ENCODE measurements at regions of chr17 and their contacts with region 1.

Region 1: GRCh38 chr17:409848-410545 is 57.4 kb upstream of the RPH3AL start:
- H3K4me3 ChIP-seq: peak overlapping the region; percentile 45
- H3K27ac ChIP-seq: peak overlapping the region; percentile 70; the same call in 1 of the 2 replicates
- H3K4me1 ChIP-seq: peaks cover 6% of the 10 kb centered on the region
- CTCF ChIP-seq: peak; percentile 76

Region 2: GRCh38 chr17:301681-302298 is 108.2 kb before region 1 on chr17:
- CTCF ChIA-PET with region 1: no interaction called
- POLR2A ChIA-PET with region 1: no interaction called
- H3K4me3 ChIP-seq: no peak overlapping the region
- H3K27ac ChIP-seq: no peak overlapping the region
- H3K4me1 ChIP-seq: no peaks in the 10 kb centered on the region
- CTCF ChIP-seq: no peak

Region 3: DNA sequence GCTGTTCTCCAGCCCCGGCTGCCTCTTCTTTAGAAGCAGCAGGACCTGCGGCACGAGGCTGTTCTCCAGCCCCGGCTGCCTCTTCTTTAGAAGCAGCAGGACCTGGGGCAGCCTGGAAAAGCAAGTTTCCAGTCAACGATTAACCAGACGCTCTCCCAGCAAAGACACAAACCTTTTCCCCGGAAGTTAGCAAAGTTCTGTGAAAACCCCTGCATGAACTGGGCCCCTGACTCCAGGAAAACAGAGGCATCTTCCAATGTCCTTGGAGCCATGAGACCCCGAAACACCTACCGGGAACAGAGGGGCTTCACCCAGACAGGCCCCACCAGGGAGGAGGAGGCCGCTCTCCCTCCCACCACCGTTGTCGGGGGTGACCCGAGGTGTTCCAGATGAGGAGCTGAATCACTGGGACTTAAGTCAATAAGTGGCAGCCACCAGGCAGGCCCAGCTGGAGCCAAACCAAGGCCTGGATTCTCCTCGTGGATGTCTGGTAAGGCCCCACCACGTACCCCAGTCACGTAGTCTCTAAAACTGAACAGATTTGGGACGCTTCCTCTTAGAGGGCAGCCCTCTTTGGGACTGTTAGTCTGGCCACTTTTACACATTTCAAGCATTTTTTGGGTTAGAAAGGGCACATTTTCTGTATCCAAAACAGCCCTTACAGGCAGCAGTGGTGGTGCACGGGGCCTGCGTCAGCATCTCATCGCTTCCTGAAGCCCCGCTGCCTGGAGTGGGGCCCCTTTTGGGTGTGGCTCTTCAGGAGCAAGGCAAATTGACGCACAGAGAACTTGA is 57.4 kb before region 1 on chr17 and contains the start of gene RPH3AL:
- CTCF ChIA-PET with region 1: no interaction called
- POLR2A ChIA-PET with region 1: no interaction called
- H3K4me3 ChIP-seq: no peak within 1 kb of the TSS
- H3K27ac ChIP-seq: peak within 1 kb of the TSS; percentile 49; the same call in 1 of the 2 replicates
- H3K4me1 ChIP-seq: peaks cover 13% of the 10 kb centered on the region
- CTCF ChIP-seq: no peak

Region 4: DNA sequence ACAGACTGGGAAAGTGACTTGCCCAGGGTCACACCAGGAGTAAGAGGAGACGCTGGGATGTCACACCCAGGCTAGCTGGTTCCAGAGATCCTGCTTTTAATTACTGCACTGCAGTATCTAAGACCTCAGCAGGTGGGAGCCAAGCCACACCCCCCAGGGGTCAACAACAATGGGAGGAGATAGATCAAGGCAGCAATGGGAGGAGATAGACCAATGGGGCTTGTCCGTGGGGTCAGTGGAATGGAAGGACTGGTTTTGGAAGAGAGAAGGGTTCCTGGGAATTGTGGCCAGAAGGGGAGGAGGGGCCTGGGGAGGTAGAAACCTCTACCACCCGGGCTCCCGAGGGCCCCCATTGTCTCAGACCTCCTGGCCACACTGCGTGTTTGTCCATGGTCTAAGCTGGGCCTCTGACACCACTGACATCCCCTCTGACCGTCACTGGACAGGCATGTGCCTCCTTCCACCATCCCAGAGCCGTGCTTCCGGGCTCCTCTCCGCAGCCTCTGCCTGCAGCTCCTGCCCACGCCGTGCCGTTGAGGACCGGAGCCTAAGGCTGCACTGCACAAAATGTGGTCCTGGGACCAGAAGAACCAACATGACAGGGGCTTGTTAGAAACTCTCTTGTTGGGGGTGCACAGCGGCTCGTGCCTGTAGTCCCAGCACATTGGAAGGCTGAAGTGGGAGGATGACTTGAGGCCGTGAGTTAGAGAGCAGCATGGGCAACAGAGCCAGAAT is 12.4 kb after region 1 on chr17:
- CTCF ChIA-PET with region 1: interaction called, 16 read pairs
- POLR2A ChIA-PET with region 1: interaction called, 7 read pairs
- H3K4me3 ChIP-seq: no peak overlapping the region
- H3K27ac ChIP-seq: no peak overlapping the region
- H3K4me1 ChIP-seq: no peaks in the 10 kb centered on the region
- CTCF ChIP-seq: no peak

Region 5: DNA sequence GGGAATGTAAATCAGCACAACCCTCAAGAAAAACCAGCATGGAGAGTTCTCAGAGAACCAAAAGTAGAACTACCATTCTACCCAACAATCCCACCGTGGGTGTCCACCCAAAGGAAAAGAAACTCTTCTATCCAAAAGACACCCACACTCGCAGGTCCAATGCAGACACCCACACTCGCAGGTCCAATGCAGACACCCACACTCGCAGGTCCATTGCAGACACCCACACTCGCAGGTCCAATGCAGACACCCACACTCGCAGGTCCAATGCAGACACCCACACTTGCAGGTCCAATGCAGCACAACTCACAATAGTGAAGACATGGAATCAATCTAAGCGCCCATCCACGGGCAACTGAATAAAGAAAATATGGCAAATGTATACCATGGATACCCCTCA is 19.6 kb after region 1 on chr17:
- CTCF ChIA-PET with region 1: interaction called, 16 read pairs
- POLR2A ChIA-PET with region 1: no interaction called
- H3K4me3 ChIP-seq: no peak overlapping the region
- H3K27ac ChIP-seq: no peak overlapping the region
- H3K4me1 ChIP-seq: no peaks in the 10 kb centered on the region
- CTCF ChIP-seq: no peak

Region 6: DNA sequence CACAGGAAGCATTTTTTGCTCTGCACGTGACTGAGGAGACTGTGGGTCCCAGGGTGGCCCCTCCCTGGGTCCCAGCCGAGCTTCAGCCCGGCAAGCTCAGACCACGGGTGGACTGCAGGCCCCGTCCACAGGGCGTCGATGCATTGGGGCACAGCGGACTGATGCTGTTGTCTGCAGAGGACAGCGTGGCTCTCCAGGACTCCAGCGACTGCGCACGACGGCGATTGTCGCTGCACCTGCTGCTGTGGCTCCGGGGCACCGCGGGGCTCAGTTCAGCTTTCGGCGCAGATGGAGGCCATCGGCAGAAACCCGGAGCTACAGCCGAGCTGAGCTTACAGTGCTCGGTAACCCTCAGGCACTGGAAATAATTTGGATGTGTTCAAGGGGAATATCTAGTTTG is 31.2 kb after region 1 on chr17:
- CTCF ChIA-PET with region 1: interaction called, 14 read pairs
- POLR2A ChIA-PET with region 1: interaction called, 3 read pairs
- H3K4me3 ChIP-seq: no peak overlapping the region
- H3K27ac ChIP-seq: no peak overlapping the region
- H3K4me1 ChIP-seq: no peaks in the 10 kb centered on the region
- CTCF ChIP-seq: no peak

Region 7: GRCh38 chr17:688100-688989 is 278.3 kb after region 1 on chr17:
- CTCF ChIA-PET with region 1: interaction called, 27 read pairs
- POLR2A ChIA-PET with region 1: no interaction called
- H3K4me3 ChIP-seq: no peak overlapping the region
- H3K27ac ChIP-seq: no peak overlapping the region
- H3K4me1 ChIP-seq: no peaks in the 10 kb centered on the region
- CTCF ChIP-seq: no peak

Region 8: GRCh38 chr17:700504-701094 is 290.6 kb after region 1 on chr17:
- CTCF ChIA-PET with region 1: interaction called, 173 read pairs
- POLR2A ChIA-PET with region 1: interaction called, 3 read pairs
- H3K4me3 ChIP-seq: no peak overlapping the region
- H3K27ac ChIP-seq: no peak overlapping the region
- H3K4me1 ChIP-seq: no peaks in the 10 kb centered on the region
- CTCF ChIP-seq: 0 out of 2 replicates have a peak, but pooled peaks have one; percentile 34